ENCODE measurements at regions of chr11 and their contacts with region 1.

Region 1: GRCh38 chr11:128809128-128809527 is 58.0 kb downstream of the KCNJ1 start:
- DNase-seq: no peak

Region 2: GRCh38 chr11:128786507-128786906 is 22.6 kb before region 1 on chr11:
- intact Hi-C with region 1: loop called in 1 of 2 experiments (anchors 1 kb)
- DNase-seq: no peak

Region 3: DNA sequence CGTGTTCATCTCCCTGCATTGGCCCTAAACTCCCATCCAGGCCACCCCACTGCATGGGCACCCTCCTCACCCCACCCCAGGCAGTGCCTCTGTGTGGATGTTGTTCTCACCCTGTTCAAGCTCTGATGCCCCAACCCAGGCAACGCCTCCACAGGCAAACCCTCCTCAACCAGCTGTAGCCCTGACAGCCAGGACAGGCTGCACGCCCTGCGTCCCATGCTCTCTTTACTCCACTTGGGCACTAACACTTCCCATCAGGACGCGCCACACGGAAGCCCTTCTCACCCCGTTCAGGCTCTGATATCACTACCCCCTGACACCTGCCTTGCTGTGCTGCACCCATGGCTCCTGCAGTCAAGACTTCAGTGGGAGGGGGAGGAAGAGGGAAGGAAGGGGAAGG is 10.1 kb after region 1 on chr11:
- intact Hi-C with region 1: no loop called
- DNase-seq: no peak

Region 4: GRCh38 chr11:128831174-128832120 is 22.3 kb after region 1 on chr11:
- intact Hi-C with region 1: loop called in 1 of 2 experiments (anchors 1 kb)
- DNase-seq: peak; percentile 94

Measured in posterior vena cava (tissue), 2 donors.